Mammary epithelial cell (primary cell): ENCODE measurements at regions of chr1 and their contacts with region 1.

Region 1: DNA sequence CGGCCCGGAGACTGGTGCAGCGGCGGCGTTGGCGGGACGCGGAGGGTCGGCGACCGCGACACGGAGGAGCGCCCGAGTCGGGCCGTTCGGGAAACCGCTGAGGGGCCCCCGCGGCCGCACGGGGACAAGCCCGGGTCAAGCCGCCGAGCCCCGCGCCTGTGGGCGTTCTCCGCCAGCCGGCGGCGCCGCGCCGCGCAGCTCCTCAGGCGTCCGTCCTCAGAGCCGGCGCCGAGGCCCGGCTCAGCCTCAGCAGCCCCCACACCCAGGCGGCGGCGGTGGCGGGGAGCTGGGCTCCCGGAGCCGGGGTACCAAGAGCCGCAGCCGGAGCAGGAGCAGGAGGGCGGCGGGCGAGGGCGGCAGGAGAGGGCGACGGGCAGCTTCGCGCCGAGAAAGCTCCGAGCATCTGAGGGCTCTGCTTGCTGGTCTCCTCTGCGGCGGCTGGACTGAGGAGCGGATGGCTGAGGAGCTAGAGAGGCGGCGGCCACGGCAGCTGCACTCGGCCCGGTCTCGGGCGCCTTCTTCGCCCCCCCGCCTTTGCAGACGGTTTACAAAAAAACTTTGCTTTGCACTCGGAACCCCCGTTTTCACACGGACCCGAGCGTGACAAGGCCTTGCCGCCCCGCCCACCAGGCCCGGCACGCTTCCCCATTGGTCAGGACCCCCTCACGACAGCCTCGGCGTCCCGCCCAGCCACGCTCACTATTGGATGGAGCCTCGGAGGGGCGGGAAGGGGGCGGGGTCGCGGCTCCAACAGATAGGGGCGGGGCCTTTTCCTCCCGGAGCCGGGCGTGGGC is at the start of gene SLC30A1:
- DNase-seq: peak; percentile 98
- H3K4me3 ChIP-seq: peak within 1 kb of the TSS; percentile 85 to 96 (median 96)
- H3K27ac ChIP-seq: peak within 1 kb of the TSS; percentile 59
- H3K4me1 ChIP-seq: peaks cover 23% of the 10 kb centered on the region
- H3K27me3 ChIP-seq: no peaks in the 10 kb centered on the region
- CTCF ChIP-seq: no peak
- total RNA-seq, gene SLC30A1: 30.2 to 63.0 TPM

Region 2: DNA sequence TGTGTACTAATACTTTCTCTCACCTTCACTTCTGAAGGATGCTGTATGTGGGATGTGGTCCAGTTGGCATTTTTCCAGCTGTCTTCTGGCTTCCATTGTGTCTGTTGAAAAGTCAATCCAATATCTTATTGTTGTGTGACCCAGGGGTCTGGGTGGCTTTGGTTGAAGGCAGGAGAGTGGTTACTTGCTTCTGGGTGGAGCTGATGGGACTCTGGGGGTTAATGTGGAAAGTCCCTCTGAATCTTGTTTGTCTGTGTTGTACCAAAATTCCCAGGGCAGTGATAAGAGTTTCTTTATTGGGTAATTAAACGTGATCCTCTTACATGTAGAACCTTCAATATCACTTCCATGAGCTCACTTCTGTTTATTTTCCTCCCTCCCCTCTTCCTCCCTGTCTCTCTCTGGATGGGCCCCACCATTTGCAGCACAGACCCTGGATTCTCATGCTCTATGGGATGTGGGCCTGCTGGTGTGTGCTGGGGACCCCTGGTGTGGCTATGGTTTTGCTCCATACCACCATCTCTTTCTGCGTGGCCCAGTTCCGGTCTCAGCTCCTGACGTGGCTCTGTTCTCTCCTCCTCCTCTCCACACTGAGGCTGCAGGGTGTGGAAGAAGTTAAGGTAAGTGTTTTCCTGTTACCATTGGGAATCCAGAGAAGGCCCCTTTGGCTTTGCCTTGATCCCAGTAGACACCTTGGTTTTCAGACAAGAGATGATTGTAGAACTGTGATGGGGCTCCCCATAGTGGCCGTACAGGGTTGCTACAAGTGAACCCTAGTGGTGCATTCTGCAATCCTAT is 1178.6 kb before region 1 on chr1:
- CTCF ChIA-PET with region 1: no interaction called
- dilution Hi-C with region 1: no loop called
- in situ Hi-C with region 1: no loop called
- intact Hi-C with region 1: loop called (anchors 10 kb)
- DNase-seq: peak; percentile 74
- H3K4me3 ChIP-seq: no peak overlapping the region
- H3K27ac ChIP-seq: no peak overlapping the region
- H3K4me1 ChIP-seq: peaks cover 18% of the 10 kb centered on the region
- H3K27me3 ChIP-seq: no peaks in the 10 kb centered on the region
- CTCF ChIP-seq: peak; percentile 96

Region 3: GRCh38 chr1:211476200-211476849 is 102.5 kb before region 1 on chr1:
- CTCF ChIA-PET with region 1: no interaction called
- dilution Hi-C with region 1: no loop called
- in situ Hi-C with region 1: no loop called
- intact Hi-C with region 1: loop called (anchors 5 kb)
- DNase-seq: peak; percentile 36
- H3K4me3 ChIP-seq: no peak overlapping the region
- H3K27ac ChIP-seq: no peak overlapping the region
- H3K4me1 ChIP-seq: no peaks in the 10 kb centered on the region
- H3K27me3 ChIP-seq: peaks cover 4% of the 10 kb centered on the region
- CTCF ChIP-seq: peak; percentile 90 to 96

Region 4: DNA sequence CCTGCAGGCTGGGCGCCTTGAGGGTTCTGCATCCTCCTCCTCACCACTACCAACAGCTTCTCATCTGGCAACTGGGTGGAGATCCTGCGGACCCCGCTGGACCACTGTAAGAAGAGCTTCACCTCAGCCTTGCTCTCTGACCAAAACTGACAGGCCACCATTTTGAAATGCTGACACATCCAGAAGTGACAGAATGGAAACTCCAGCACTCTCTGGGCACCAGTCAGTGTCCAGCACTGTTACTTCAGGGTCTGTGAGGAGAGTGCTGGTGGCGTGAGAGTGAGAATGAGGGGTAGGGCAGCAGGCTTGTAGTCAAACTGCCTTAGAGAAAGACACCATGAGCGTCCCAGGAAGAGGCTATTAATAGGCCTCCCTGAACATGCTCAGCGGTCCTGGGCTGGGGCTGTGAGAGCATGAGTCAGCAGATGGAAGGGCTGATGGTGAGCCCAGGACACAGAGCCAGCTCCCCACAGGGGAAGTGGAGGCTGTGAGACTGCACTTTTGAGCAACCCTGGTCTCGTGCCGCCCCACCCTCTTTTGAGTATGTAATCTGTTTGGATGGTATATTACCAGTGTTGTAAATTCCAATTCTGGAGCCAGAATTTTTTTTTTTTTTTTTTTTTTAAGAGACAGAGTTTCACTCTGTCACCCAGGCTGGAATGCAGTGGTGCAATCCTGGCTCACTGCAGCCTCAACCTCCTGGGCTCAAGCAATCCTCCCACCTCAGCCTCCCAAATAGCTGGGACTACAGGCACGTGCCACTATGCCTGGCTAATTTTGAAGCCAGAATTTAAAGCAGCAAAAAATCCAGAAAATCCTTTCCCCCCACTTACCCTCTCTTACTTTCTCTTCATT is 34.5 kb after region 1 on chr1:
- CTCF ChIA-PET with region 1: no interaction called
- dilution Hi-C with region 1: no loop called
- in situ Hi-C with region 1: no loop called
- intact Hi-C with region 1: loop called (anchors 5 kb)
- DNase-seq: peak; percentile 90
- H3K4me3 ChIP-seq: no peak overlapping the region
- H3K27ac ChIP-seq: no peak overlapping the region
- H3K4me1 ChIP-seq: peaks cover 14% of the 10 kb centered on the region
- H3K27me3 ChIP-seq: no peaks in the 10 kb centered on the region
- CTCF ChIP-seq: no peak

Region 5: GRCh38 chr1:211654838-211655787 is 76.3 kb after region 1 on chr1:
- CTCF ChIA-PET with region 1: no interaction called
- dilution Hi-C with region 1: no loop called
- in situ Hi-C with region 1: loop called in 1 of 2 experiments (anchors 5 kb)
- intact Hi-C with region 1: loop called (anchors 1 kb)
- DNase-seq: peak; percentile 68
- H3K4me3 ChIP-seq: no peak overlapping the region
- H3K27ac ChIP-seq: no peak overlapping the region
- H3K4me1 ChIP-seq: peaks cover 13% of the 10 kb centered on the region
- H3K27me3 ChIP-seq: no peaks in the 10 kb centered on the region
- CTCF ChIP-seq: peak; percentile 86 to 97

Region 6: DNA sequence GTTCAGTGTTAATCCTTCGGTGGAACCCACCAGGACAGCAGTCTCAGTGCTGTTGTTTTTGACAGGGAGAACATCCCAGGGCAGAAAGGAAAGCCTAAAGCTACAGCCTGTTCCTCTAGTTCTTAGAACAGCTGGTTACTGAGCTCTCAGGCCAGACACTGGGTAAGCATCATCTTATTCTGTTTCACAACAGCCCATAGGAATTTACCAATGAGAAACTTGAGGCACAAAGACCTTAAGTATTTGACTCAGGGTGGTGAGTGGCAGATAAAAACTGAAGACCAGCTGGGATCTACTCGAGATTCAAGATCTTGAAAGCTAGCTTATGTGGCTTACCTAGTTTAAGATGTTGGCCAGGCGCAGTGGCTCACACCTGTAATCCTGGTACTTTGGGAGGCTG is 106.0 kb after region 1 on chr1:
- CTCF ChIA-PET with region 1: no interaction called
- dilution Hi-C with region 1: no loop called
- in situ Hi-C with region 1: no loop called
- intact Hi-C with region 1: no loop called
- DNase-seq: peak; percentile 20
- H3K4me3 ChIP-seq: no peak overlapping the region
- H3K27ac ChIP-seq: no peak overlapping the region
- H3K4me1 ChIP-seq: peaks cover 5% of the 10 kb centered on the region
- H3K27me3 ChIP-seq: no peaks in the 10 kb centered on the region
- CTCF ChIP-seq: no peak